Activated CD4-positive, alpha-beta T cell treated with anti-CD3 and anti-CD28 coated beads for 36 hours (primary cell): ENCODE measurements at regions of chr11 and their contacts with region 1.

Region 1: DNA sequence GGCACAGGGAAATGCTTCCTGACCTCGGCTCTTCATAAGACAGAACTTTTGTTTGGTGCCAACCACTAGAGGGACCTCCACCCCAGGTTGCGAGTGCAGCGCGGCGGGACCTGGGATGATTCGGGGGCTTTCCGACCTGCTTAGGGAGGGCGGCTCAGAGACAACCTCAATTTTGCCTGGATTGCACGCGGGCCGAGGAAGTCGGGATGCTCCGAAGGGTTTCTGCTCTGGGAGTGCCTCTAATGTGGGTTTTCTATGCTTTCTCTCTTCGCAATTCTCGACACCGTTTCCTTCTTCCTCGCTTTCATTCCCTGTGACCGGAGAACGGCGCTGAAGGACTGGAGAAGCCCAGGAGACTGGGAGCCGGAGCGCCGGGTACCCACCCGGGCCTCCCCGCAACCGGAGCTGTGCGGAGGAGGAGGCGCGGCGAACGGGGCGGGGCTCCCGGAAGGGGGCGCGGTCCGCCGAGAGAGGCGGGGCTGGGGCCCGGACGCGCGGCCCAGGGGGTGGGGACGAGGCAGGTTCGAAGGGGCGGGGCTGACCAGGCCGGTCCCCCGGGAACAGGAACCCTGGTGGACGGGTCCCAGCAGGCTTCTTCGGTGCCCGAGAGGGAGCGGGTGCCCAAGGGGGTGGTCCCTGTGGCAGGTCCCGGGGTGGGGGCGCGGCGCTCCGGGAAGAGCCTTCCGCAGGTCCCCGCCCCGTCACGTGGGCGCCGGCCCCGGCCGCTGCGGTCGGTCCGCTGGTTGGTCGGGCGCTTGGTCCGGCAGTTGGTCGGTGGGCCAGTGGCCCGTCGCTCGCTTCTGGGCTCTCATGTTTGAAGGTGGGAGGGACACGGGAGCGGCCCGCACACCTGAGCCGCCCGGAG is at the start of gene PPFIBP2:
- DNase-seq: peak; percentile 89
- ATAC-seq: peak; percentile 89
- H3K4me3 Mint-ChIP-seq: peak within 1 kb of the TSS; percentile 86
- H3K27ac Mint-ChIP-seq: peak within 1 kb of the TSS; percentile 93
- H3K4me1 Mint-ChIP-seq: peaks cover 45% of the 10 kb centered on the region
- H3K27me3 Mint-ChIP-seq: peaks cover 2% of the 10 kb centered on the region
- total RNA-seq, gene PPFIBP2: 7.9 to 13.2 TPM

Region 2: DNA sequence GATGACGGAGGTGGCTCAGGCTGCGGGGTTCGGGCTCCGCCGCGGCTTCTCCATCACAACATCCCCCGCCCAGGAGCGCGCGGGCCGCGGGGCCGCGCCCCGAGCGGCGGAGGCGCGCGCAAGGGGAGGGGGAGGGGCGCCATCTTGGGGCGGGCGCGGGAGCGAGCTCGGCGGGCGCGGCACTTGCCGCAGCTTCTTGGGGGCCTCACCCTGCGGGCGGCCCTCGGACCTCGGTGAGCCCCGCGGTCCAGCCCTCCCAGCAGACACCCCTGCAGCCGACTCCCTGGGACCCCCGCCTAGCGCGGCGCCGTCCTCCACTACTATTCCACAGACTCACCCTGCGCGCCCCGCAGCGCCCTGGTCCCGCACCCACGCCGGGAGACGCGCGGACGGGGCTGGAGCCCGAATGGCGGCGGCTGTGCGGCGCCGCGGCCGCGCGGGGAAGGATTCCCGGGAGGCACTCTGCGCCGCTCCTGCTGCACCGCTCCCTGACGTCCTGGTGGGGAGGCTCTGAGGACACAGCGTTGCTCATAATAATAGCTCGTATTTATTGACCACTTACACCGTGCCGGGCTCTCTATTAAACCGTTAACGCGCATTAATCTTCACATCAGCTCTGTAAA is 1094.3 kb before region 1 on chr11 and contains the start of gene APBB1:
- CTCF ChIA-PET with region 1: no interaction called
- POLR2A ChIA-PET with region 1: no interaction called
- intact Hi-C with region 1: loop called in 1 of 2 experiments (anchors 10 kb)
- DNase-seq: peak; percentile 86
- ATAC-seq: peak; percentile 54
- H3K4me3 Mint-ChIP-seq: peak within 1 kb of the TSS; percentile 72
- H3K27ac Mint-ChIP-seq: peak within 1 kb of the TSS; percentile 73
- H3K4me1 Mint-ChIP-seq: peaks cover 7% of the 10 kb centered on the region
- H3K27me3 Mint-ChIP-seq: peaks cover 6% of the 10 kb centered on the region
- total RNA-seq, gene APBB1: 43.2 to 49.8 TPM

Region 3: DNA sequence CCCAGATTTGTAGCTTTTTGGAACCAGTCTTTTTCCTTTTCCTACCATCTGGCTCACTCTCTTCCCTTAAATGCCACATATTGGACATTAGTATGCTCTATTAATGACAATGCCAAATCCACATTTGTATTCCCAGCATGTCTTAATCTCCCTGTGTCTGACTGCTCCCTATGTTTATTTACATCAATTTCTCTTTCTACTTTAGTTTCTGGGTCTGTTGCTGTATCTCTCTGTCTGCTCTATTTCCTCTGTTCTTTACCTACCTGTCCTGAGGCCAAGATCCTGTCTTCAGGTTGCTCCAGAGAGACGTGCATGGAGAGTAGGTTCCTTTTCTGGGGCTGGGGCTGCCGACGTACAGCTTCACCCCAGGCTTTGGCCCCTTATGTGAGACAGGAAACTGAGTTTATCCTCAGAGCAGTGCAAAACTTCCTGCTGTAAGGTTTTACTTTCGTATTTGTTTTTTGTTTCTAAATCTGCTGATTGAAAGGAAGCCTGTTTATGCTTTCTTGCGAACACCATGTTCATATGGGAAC is 767.3 kb before region 1 on chr11:
- CTCF ChIA-PET with region 1: no interaction called
- POLR2A ChIA-PET with region 1: no interaction called
- intact Hi-C with region 1: loop called in 1 of 2 experiments (anchors 5 kb)
- DNase-seq: peak; percentile 58
- ATAC-seq: peak; percentile 85
- H3K4me3 Mint-ChIP-seq: no peak overlapping the region
- H3K27ac Mint-ChIP-seq: no peak overlapping the region
- H3K4me1 Mint-ChIP-seq: peaks cover 30% of the 10 kb centered on the region
- H3K27me3 Mint-ChIP-seq: no peaks in the 10 kb centered on the region

Region 4: DNA sequence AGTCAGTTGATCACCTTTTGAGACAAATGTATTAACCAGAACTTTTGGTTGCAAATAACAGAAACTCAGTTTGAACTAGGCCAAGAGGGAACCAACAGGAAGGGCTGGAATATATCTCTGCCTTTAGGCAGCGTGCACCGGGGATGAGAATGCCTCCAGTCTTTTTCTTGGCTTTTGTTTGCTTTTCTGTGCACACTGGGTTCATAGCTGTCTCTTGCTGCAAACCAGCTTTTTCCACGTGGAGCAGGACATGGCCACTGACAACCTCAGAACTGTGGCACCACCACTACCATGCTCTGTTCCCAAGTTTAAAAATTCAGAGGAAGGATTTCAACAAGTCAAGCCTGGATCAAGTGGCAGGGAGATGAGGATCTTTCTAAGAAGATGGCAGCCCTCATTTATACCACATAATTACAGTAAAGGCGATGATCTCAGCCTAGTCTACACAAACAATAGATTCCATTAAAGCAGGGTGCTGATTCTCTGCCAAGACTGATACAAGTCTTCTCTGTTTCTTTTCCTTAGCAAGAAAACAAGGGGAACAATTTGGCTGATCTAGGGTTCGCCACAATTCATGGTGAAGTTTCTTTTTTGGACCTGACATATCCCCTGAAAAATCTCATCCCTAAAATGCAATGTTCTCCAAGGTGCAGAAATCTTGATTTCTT is 74.1 kb after region 1 on chr11:
- CTCF ChIA-PET with region 1: no interaction called
- POLR2A ChIA-PET with region 1: no interaction called
- intact Hi-C with region 1: no loop called
- DNase-seq: no peak
- ATAC-seq: no peak
- H3K4me3 Mint-ChIP-seq: no peak overlapping the region
- H3K27ac Mint-ChIP-seq: no peak overlapping the region
- H3K4me1 Mint-ChIP-seq: peaks cover 21% of the 10 kb centered on the region
- H3K27me3 Mint-ChIP-seq: no peaks in the 10 kb centered on the region

Region 5: DNA sequence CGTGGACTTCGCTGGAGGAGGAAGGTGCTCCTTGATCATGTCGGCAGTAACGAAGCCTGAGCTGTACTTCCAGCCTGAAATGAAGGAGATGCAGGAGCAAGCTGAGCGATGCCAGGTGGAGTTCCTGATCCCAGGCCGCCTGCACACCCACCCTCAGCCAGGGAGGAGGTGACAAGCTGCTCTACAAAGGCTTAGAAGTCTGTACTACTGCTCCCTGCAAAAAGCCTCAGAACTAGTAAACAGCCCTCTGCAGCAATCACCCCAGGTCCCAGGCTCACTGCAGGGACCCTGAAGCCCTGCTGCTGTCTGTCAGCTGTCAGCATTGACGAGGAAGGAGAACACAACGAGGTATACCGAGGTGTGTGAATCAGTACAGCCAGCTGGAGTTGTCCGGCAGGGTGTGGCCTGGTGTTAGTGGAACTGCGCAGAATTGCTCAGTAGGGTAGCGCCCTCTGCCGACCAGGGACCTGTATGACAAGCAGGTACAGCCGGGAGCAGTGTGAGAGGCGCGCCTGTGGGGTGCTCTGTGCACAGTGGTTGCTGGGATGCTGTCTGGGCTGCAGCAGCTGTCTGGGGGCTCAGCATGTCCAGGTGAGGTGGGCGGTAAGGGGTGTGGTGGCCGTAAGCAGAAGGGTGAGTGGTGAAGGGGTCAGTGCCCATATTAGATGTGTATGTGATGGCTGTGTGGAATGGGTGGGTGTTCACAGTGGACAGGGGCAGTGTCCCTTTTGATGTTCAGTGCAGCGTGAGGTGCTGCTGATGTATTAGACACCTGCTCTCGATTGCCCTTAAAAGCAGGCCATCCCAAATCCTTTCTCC is 152.2 kb after region 1 on chr11:
- CTCF ChIA-PET with region 1: interaction called, 9 read pairs
- POLR2A ChIA-PET with region 1: no interaction called
- intact Hi-C with region 1: loop called (anchors 1 kb)
- DNase-seq: peak; percentile 90
- ATAC-seq: peak; percentile 98
- H3K4me3 Mint-ChIP-seq: no peak overlapping the region
- H3K27ac Mint-ChIP-seq: no peak overlapping the region
- H3K4me1 Mint-ChIP-seq: peaks cover 6% of the 10 kb centered on the region
- H3K27me3 Mint-ChIP-seq: no peaks in the 10 kb centered on the region

Region 6: GRCh38 chr11:7696424-7696823 is 183.0 kb after region 1 on chr11:
- CTCF ChIA-PET with region 1: interaction called, 6 read pairs
- POLR2A ChIA-PET with region 1: no interaction called
- intact Hi-C with region 1: loop called in 1 of 2 experiments (anchors 1 kb)
- DNase-seq: peak; percentile 20
- ATAC-seq: peak; percentile 75
- H3K4me3 Mint-ChIP-seq: no peak overlapping the region
- H3K27ac Mint-ChIP-seq: no peak overlapping the region
- H3K4me1 Mint-ChIP-seq: peaks cover 4% of the 10 kb centered on the region
- H3K27me3 Mint-ChIP-seq: peaks cover 24% of the 10 kb centered on the region